ENCODE measurements at regions of chr19 and their contacts with region 1.

Region 1: GRCh38 chr19:41263850-41264580 is at the start of gene HNRNPUL1:
- DNase-seq: peak; percentile 100
- ATAC-seq: peak; percentile 77
- H3K4me3 ChIP-seq: peak within 1 kb of the TSS; percentile 82
- H3K27ac ChIP-seq: peak within 1 kb of the TSS; percentile 93
- H3K4me1 ChIP-seq: peaks cover 9% of the 10 kb centered on the region
- H3K27me3 ChIP-seq: no peaks in the 10 kb centered on the region
- CTCF ChIP-seq: 0 out of 2 replicates have a peak, but pooled peaks have one; percentile 22
- POLR2A ChIP-seq: no peak
- RAD21 ChIP-seq: no peak
- total RNA-seq, gene HNRNPUL1: 50.7 and 56.1 TPM in 2 replicates

Region 2: GRCh38 chr19:40662921-40663694 is 600.9 kb before region 1 on chr19:
- CTCF ChIA-PET with region 1: no interaction called
- POLR2A ChIA-PET with region 1: no interaction called
- dilution Hi-C with region 1: no loop called
- in situ Hi-C with region 1: loop called (anchors 25 kb)
- intact Hi-C with region 1: no loop called
- DNase-seq: peak; percentile 84
- ATAC-seq: peak; percentile 84
- H3K4me3 ChIP-seq: peak overlapping the region; percentile 57
- H3K27ac ChIP-seq: peak overlapping the region; percentile 96
- H3K4me1 ChIP-seq: peaks cover 6% of the 10 kb centered on the region
- H3K27me3 ChIP-seq: no peaks in the 10 kb centered on the region
- CTCF ChIP-seq: peak; percentile 96
- POLR2A ChIP-seq: peak; percentile 50; the same call in 1 of the 2 replicates
- RAD21 ChIP-seq: peak; percentile 93

Region 3: GRCh38 chr19:41123716-41124294 is 140.2 kb before region 1 on chr19:
- CTCF ChIA-PET with region 1: no interaction called
- POLR2A ChIA-PET with region 1: no interaction called
- dilution Hi-C with region 1: no loop called
- in situ Hi-C with region 1: no loop called
- intact Hi-C with region 1: loop called (anchors 2 kb)
- DNase-seq: no peak
- ATAC-seq: no peak
- H3K4me3 ChIP-seq: no peak overlapping the region
- H3K27ac ChIP-seq: no peak overlapping the region
- H3K4me1 ChIP-seq: no peaks in the 10 kb centered on the region
- H3K27me3 ChIP-seq: no peaks in the 10 kb centered on the region; the same call in 1 of the 2 replicates
- CTCF ChIP-seq: no peak
- POLR2A ChIP-seq: no peak
- RAD21 ChIP-seq: no peak

Region 4: DNA sequence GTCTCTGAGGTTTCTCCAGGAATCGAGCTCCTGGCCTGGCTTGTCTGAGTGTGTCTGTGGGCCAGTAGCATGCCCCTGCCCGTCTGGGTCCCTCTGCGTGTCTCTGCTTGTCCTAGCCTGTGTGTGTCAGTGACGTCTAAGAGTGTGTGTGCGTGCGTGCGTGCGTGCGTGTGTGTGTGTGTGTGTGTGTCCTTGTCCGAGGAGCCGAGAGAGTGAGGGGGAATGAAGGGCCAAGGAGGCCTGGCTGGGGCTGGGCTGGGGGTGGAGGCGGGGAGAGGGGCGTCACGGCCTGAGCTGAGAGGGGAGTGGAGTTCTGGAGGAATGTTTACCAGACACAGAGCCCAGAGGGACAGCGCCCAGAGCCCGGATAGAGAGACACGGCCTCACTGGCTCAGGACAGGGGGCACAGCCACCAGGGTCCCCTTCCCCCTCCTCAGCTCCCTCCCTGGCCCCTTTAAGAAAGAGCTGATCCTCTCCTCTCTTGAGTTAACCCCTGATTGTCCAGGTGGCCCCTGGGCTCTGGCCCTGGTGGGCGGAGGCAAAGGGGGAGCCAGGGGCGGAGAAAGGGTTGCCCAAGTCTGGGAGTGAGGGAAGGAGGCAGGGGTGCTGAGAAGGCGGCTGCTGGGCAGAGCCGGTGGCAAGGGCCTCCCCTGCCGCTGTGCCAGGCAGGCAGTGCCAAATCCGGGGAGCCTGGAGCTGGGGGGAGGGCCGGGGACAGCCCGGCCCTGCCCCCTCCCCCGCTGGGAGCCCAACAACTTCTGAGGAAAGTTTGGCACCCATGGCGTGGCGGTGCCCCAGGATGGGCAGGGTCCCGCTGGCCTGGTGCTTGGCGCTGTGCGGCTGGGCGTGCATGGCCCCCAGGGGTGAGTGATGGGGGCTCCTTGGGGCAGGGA is 45.2 kb before region 1 on chr19 and contains the start of gene AXL:
- CTCF ChIA-PET with region 1: interaction called, 10 read pairs
- POLR2A ChIA-PET with region 1: interaction called, 3 read pairs
- dilution Hi-C with region 1: no loop called
- in situ Hi-C with region 1: no loop called
- intact Hi-C with region 1: loop called (anchors 2 kb)
- DNase-seq: peak; percentile 86
- ATAC-seq: peak; percentile 72
- H3K4me3 ChIP-seq: peak within 1 kb of the TSS; percentile 89
- H3K27ac ChIP-seq: peak within 1 kb of the TSS; percentile 99
- H3K4me1 ChIP-seq: peaks cover 28% of the 10 kb centered on the region
- H3K27me3 ChIP-seq: no peaks in the 10 kb centered on the region
- CTCF ChIP-seq: no peak
- POLR2A ChIP-seq: peak; percentile 93
- RAD21 ChIP-seq: 0 out of 2 replicates have a peak, but pooled peaks have one; percentile 1
- total RNA-seq, gene AXL: 444 and 466 TPM in 2 replicates

Region 5: GRCh38 chr19:41310033-41310758 is 46.2 kb after region 1 on chr19 and contains the start of gene CCDC97:
- CTCF ChIA-PET with region 1: interaction called, 3 read pairs
- POLR2A ChIA-PET with region 1: no interaction called
- dilution Hi-C with region 1: no loop called
- in situ Hi-C with region 1: no loop called
- intact Hi-C with region 1: loop called (anchors 2 kb)
- DNase-seq: peak; percentile 85
- ATAC-seq: peak; percentile 81
- H3K4me3 ChIP-seq: peak within 1 kb of the TSS; percentile 72
- H3K27ac ChIP-seq: peak within 1 kb of the TSS; percentile 96
- H3K4me1 ChIP-seq: peaks cover 7% of the 10 kb centered on the region
- H3K27me3 ChIP-seq: no peaks in the 10 kb centered on the region
- CTCF ChIP-seq: no peak
- POLR2A ChIP-seq: peak; percentile 82
- RAD21 ChIP-seq: no peak
- total RNA-seq, gene CCDC97: 4.1 and 5.8 TPM in 2 replicates